ENCODE measurements at regions of chr17 and their contacts with region 1.

Region 1: DNA sequence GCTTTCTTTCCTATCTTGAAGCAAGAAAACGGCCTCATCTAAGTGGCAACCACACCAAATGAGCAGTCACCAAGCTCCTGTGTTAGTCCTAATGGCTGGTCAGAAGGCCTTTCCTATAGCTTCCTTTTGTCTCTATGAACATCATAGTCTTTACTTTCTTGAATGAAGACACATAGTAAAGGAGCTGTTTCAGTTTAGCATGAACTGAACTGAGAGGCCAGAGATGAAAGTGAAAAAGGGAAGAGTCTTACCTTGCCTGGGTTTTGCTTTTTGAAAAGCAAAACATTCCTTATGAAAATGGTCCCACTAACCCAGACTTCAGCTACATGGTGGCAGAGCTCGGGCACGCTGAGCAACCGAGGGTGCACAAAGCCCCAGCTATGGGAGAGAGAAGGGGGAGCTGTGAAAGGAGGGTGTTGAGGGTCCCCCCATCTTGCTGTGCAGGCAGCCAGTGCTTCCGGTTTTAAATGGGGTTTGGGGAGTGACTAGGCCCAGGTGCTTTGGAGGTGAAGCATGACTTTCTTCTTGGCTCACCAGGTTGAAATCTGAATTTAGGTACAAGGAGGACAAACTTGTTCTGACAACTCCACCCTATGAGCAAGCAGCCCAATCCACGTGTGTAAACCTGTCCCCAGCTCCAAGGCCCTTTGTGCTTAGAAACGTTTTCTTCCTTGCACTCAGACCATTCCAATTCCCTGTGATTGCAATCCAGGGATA is 9.1 kb upstream of the PSMC3IP start:
- DNase-seq: no peak
- ATAC-seq: peak; percentile 94
- H3K4me3 ChIP-seq: peak overlapping the region; percentile 41; the same call in 1 of the 2 replicates
- H3K27ac ChIP-seq: peak overlapping the region; percentile 60
- H3K4me1 ChIP-seq: peaks cover 32% of the 10 kb centered on the region
- H3K27me3 ChIP-seq: no peaks in the 10 kb centered on the region
- CTCF ChIP-seq: no peak
- EP300 ChIP-seq: no peak
- POLR2A ChIP-seq: peak; percentile 39; the same call in 1 of the 2 replicates
- RAD21 ChIP-seq: no peak

Region 2: DNA sequence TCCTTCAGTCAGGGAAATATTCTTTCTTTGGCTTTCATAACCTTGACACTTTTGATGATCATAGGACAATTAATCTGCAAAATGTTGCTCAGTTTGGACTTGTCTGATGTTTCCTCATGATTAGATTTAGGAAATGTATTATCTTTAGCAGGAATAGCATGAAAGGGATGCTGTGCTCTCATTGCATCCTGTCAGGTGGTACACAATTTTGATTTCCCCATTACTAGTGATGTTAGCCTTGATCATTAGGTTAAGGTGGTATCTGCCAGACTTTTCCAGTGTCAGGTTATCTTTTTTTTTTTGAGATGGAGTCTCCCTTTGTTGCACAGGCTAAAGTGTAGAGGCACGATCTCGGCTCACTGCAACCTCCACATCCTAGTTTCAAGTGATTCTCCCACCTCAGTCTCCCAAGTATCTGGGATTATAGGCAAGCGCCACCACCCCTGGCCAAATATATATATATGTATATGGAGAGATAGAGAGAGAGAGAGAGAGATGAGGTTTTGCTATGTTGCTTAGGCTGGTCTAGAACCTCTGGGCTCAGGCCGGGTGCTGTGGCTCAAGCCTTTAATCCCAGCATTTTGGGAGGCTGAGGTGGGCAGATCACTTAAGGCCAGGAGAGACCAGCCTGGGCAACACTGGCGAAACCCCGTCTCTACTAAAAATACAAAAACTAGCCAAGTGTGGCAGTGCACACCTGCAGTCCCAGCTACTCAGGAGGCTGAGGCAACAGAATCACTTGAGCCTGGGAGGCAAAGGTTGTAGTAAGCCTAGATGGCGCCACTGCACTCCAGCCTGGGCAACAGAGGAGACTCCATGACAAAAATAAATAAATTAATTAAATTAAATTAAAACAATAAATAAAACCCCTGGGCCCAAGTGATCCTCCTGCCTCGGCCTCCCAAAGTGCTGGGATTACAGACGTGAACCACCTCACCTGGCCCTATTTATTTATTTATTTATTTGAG is 147.8 kb before region 1 on chr17:
- CTCF ChIA-PET with region 1: no interaction called
- POLR2A ChIA-PET with region 1: no interaction called
- RAD21 ChIA-PET with region 1: no interaction called
- SMC1A ChIA-PET with region 1: no interaction called
- in situ Hi-C with region 1: no loop called
- intact Hi-C with region 1: no loop called
- DNase-seq: no peak
- ATAC-seq: peak; percentile 82
- H3K4me3 ChIP-seq: no peak overlapping the region
- H3K27ac ChIP-seq: no peak overlapping the region
- H3K4me1 ChIP-seq: 0 out of 2 replicates have a peak, but pooled peaks cover 4% of the 10 kb centered on the region
- H3K27me3 ChIP-seq: no peaks in the 10 kb centered on the region
- CTCF ChIP-seq: peak; percentile 30 to 56 (median 47); a peak in 5 of 6 replicates
- EP300 ChIP-seq: no peak
- POLR2A ChIP-seq: no peak
- RAD21 ChIP-seq: peak; percentile 61

Region 3: GRCh38 chr17:42560246-42560645 is 26.4 kb before region 1 on chr17:
- CTCF ChIA-PET with region 1: no interaction called
- POLR2A ChIA-PET with region 1: no interaction called
- RAD21 ChIA-PET with region 1: no interaction called
- SMC1A ChIA-PET with region 1: no interaction called
- in situ Hi-C with region 1: no loop called
- intact Hi-C with region 1: no loop called
- DNase-seq: no peak
- ATAC-seq: no peak
- H3K4me3 ChIP-seq: no peak overlapping the region
- H3K27ac ChIP-seq: no peak overlapping the region
- H3K4me1 ChIP-seq: peaks cover 17% of the 10 kb centered on the region
- H3K27me3 ChIP-seq: no peaks in the 10 kb centered on the region
- CTCF ChIP-seq: no peak
- EP300 ChIP-seq: no peak
- POLR2A ChIP-seq: no peak
- RAD21 ChIP-seq: no peak

Region 4: DNA sequence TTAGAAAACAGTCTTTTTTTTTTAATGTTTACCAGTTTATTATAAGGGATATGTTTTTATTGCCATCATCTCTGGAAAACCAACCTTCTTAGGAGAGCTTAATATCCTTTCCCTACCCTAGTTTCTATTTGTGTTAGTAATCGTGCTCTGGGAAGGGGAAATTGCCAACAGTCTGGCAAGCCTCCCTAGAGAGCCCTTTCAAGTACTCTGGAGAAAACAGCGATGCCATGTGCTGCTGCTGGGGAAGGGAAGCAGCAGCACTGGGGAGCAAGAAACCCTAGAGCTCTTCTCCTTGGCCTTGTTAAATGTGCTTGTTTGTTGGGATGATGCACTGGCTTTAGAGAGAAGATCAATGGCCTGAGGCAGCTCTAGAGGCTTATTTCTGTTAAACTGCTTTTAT is 12.2 kb after region 1 on chr17:
- CTCF ChIA-PET with region 1: interaction called, 5 read pairs
- POLR2A ChIA-PET with region 1: interaction called, 7 read pairs
- RAD21 ChIA-PET with region 1: no interaction called
- SMC1A ChIA-PET with region 1: interaction called, 69 read pairs
- in situ Hi-C with region 1: no loop called
- intact Hi-C with region 1: no loop called
- DNase-seq: no peak
- ATAC-seq: no peak
- H3K4me3 ChIP-seq: no peak overlapping the region
- H3K27ac ChIP-seq: no peak overlapping the region
- H3K4me1 ChIP-seq: peaks cover 8% of the 10 kb centered on the region
- H3K27me3 ChIP-seq: no peaks in the 10 kb centered on the region
- CTCF ChIP-seq: no peak
- EP300 ChIP-seq: no peak
- POLR2A ChIP-seq: no peak
- RAD21 ChIP-seq: no peak

Region 5: DNA sequence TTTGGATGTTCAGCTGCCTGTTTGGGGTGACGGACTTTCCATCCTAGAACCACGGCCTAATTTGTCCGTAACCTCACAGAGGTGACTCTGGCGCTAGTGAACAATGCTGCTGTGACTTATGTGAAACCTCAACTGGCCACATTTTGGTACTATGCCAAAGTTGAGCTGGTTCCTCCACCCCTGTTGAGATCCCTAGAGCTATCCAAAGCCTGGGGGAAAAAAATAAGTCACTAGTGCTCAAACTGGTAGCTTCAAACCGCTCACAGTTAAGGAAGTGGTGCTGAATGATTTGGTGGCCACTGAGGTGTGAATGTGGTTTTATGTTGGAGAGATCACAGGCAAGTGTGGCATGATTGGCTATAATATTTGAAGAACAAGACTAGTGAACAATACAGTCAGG is 61.1 kb after region 1 on chr17:
- CTCF ChIA-PET with region 1: no interaction called
- POLR2A ChIA-PET with region 1: no interaction called
- RAD21 ChIA-PET with region 1: no interaction called
- SMC1A ChIA-PET with region 1: no interaction called
- in situ Hi-C with region 1: no loop called
- intact Hi-C with region 1: no loop called
- DNase-seq: peak; percentile 46
- ATAC-seq: peak; percentile 91
- H3K4me3 ChIP-seq: no peak overlapping the region
- H3K27ac ChIP-seq: no peak overlapping the region
- H3K4me1 ChIP-seq: peaks cover 3% of the 10 kb centered on the region; the same call in 1 of the 2 replicates
- H3K27me3 ChIP-seq: no peaks in the 10 kb centered on the region
- CTCF ChIP-seq: no peak
- EP300 ChIP-seq: no peak
- POLR2A ChIP-seq: no peak
- RAD21 ChIP-seq: no peak